ENCODE measurements at regions of chr4 and their contacts with region 1.

Region 1: DNA sequence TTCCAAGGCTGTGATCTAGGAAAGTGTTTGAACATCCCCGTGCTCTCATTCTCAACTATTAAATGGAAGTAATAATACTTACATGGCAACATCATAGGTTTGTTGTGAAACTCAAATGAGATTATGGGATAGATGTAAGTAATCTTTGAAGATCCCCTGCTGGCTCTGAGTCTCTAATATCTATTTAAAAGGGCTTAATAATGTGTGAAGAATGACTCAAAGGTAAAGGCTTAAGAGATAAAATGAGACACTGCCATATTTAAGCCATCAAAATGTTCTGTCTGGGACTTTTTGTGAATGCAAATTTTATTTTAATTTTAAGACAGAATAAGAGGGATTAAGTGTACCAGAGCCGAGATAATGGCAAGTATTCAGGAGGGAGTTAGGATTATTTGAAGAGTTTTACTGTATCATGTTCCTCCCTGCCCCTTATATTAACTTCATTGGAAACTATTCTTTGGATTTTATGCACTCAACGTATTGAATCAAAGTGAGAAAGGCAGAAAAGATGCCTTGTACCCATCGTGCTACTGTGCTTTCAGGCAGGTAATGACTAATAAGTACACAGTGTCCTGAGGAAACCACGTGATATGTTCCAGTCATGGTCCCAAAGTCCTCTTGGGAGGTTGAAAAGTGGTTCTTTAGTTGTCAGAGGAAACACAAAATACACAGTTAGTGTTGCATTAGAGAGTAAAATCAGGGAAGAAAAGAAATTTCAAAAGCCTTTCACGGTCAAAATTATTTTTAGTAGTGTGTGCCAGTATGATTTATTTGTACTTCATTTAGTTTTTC is 192.4 kb downstream of the RBM46 start:
- DNase-seq: no peak
- ATAC-seq: no peak
- H3K4me3 ChIP-seq: no peak overlapping the region
- H3K27ac ChIP-seq: no peak overlapping the region
- H3K4me1 ChIP-seq: no peaks in the 10 kb centered on the region
- H3K27me3 ChIP-seq: no peaks in the 10 kb centered on the region
- CTCF ChIP-seq: no peak
- POLR2A ChIP-seq: no peak
- RAD21 ChIP-seq: no peak

Region 2: GRCh38 chr4:153834901-153835300 is 1138.5 kb before region 1 on chr4:
- CTCF ChIA-PET with region 1: no interaction called
- POLR2A ChIA-PET with region 1: no interaction called
- dilution Hi-C with region 1: no loop called
- in situ Hi-C with region 1: no loop called
- intact Hi-C with region 1: no loop called
- DNase-seq: no peak
- ATAC-seq: no peak
- H3K4me3 ChIP-seq: no peak overlapping the region
- H3K27ac ChIP-seq: no peak overlapping the region
- H3K4me1 ChIP-seq: no peaks in the 10 kb centered on the region
- H3K27me3 ChIP-seq: no peaks in the 10 kb centered on the region
- CTCF ChIP-seq: no peak
- POLR2A ChIP-seq: no peak
- RAD21 ChIP-seq: no peak

Region 3: DNA sequence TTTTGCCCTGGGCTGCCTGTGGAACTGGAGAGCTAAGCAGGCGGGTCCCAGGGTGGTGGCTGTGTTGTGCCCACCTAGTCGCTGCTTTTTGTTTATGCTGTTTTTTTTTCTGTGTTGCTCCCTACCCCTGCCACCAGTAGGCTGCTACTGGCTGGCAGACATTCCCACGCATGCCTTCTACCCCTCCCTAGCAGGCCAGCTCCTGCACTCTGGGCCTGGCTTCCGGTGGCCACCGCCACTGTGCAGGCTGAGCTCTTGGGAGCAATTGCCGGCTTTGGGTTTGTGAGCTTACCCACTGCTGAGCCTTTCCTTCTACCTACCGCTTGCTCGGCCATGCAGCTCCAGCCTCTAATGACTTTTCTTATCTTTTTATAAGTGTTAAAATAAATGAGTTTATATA is 134.7 kb before region 1 on chr4:
- CTCF ChIA-PET with region 1: interaction called, 10 read pairs
- POLR2A ChIA-PET with region 1: no interaction called
- dilution Hi-C with region 1: no loop called
- in situ Hi-C with region 1: no loop called
- intact Hi-C with region 1: no loop called
- DNase-seq: no peak
- ATAC-seq: no peak
- H3K4me3 ChIP-seq: no peak overlapping the region
- H3K27ac ChIP-seq: no peak overlapping the region
- H3K4me1 ChIP-seq: no peaks in the 10 kb centered on the region
- H3K27me3 ChIP-seq: no peaks in the 10 kb centered on the region
- CTCF ChIP-seq: no peak
- POLR2A ChIP-seq: no peak
- RAD21 ChIP-seq: no peak

Region 4: DNA sequence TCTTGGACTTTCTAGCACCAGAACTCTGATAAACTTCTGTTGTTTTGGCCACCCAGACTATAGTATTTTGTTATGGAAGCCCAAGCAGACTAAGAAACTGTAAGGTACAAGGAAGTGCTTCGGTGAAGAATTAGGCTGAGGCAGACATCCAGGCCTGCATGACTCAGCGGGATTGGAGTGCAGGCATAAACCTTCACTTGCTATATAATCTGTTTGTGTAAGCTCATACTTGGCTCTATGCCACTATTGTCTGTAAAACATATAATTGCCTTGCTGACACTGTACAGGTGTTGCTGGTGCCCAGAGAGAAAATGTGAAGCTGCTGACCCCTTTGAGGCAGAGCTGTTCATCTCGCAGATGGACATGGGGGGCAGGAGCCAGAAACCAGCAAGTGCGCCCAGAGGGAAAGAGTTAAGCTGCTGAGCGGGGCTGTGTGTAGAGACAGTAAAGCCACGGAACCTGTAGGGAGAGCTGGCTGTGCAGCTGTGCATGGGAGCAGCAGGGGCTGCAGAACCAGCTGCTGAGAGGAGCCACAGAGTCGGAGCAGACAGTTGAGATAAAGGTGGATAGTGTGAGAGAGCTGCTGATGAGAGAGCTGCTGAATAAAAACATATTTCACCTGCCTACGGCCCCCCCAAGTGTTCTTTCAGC is 96.2 kb before region 1 on chr4:
- CTCF ChIA-PET with region 1: no interaction called
- POLR2A ChIA-PET with region 1: no interaction called
- dilution Hi-C with region 1: no loop called
- in situ Hi-C with region 1: no loop called
- intact Hi-C with region 1: no loop called
- DNase-seq: peak; percentile 32
- ATAC-seq: peak; percentile 56
- H3K4me3 ChIP-seq: no peak overlapping the region
- H3K27ac ChIP-seq: no peak overlapping the region
- H3K4me1 ChIP-seq: no peaks in the 10 kb centered on the region
- H3K27me3 ChIP-seq: no peaks in the 10 kb centered on the region
- CTCF ChIP-seq: no peak
- POLR2A ChIP-seq: no peak
- RAD21 ChIP-seq: no peak